Activated CD4-positive, alpha-beta T cell treated with anti-CD3 and anti-CD28 coated beads for 36 hours (primary cell): ENCODE measurements at regions of chr19 and their contacts with region 1.

Region 1: GRCh38 chr19:16495982-16496612 is at the starts of genes C19orf44 and CALR3:
- DNase-seq: peak; percentile 99
- ATAC-seq: peak; percentile 99
- H3K4me3 Mint-ChIP-seq: peak within 1 kb of the TSS; percentile 89
- H3K27ac Mint-ChIP-seq: peak within 1 kb of the TSS; percentile 79
- H3K4me1 Mint-ChIP-seq: peaks cover 13% of the 10 kb centered on the region
- H3K27me3 Mint-ChIP-seq: no peaks in the 10 kb centered on the region
- total RNA-seq, gene C19orf44: 2.9 to 4.0 TPM
- total RNA-seq, gene CALR3: not detected

Region 2: GRCh38 chr19:16197622-16198369 is 298.3 kb before region 1 on chr19 and contains the start of gene AP1M1:
- CTCF ChIA-PET with region 1: no interaction called
- POLR2A ChIA-PET with region 1: no interaction called
- intact Hi-C with region 1: loop called in 1 of 2 experiments (anchors 1 kb)
- DNase-seq: peak; percentile 99
- ATAC-seq: peak; percentile 95
- H3K4me3 Mint-ChIP-seq: peak within 1 kb of the TSS; percentile 83
- H3K27ac Mint-ChIP-seq: peak within 1 kb of the TSS; percentile 96
- H3K4me1 Mint-ChIP-seq: peaks cover 33% of the 10 kb centered on the region
- H3K27me3 Mint-ChIP-seq: no peaks in the 10 kb centered on the region
- total RNA-seq, gene AP1M1: 61.8 to 92.0 TPM

Region 3: DNA sequence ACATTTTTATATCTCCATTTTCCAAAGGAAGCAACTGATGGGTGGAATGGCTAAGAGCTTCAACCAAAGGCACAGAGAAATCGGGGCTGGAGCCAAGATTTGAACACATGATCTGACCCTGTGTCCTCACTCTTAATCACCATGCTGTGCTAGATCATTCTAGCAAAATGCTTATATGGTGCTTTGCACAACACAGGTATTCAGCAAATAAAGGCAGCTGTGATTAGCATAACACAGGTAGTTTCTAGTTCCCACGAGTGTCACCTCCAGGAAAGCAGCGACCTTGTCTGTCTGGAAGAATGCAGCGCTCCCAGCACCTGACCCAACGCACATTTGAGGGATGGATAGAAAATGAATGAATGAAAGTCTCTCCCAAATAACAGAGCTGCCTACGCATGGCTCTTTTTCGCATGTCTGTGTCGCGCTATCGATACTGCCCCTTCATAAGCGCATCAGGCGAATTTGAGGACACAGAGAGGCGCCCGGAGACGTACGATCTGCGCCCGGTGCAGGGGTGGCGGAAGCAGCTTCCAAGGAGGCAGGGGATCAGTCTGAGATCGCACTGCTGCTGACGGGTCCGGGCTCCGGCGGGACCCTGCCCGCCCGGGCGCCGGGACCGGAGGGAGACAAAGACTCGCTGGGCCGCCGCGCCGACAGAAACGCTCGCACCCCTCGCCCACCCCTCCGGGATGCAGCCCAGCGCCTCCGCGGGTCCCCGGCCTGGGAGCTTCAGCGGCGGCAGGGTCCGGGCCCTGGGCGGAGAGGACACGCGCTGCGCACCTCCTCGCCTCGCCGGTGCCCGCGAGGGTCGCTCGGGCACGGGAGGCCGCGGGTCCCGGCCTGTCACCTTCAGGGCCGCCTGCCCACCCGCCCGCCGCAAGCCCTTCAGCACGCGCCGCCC is 24.9 kb before region 1 on chr19:
- CTCF ChIA-PET with region 1: interaction called, 3 read pairs
- POLR2A ChIA-PET with region 1: no interaction called
- intact Hi-C with region 1: loop called (anchors 1 kb)
- DNase-seq: peak; percentile 60
- ATAC-seq: peak; percentile 20
- H3K4me3 Mint-ChIP-seq: peak overlapping the region; percentile 85
- H3K27ac Mint-ChIP-seq: peak overlapping the region; percentile 72
- H3K4me1 Mint-ChIP-seq: peaks cover 37% of the 10 kb centered on the region
- H3K27me3 Mint-ChIP-seq: peaks cover 2% of the 10 kb centered on the region

Region 4: GRCh38 chr19:16528073-16528472 is 32.0 kb after region 1 on chr19:
- CTCF ChIA-PET with region 1: no interaction called
- POLR2A ChIA-PET with region 1: no interaction called
- intact Hi-C with region 1: no loop called
- DNase-seq: peak; percentile 72
- ATAC-seq: peak; percentile 77
- H3K4me3 Mint-ChIP-seq: no peak overlapping the region
- H3K27ac Mint-ChIP-seq: no peak overlapping the region
- H3K4me1 Mint-ChIP-seq: no peaks in the 10 kb centered on the region
- H3K27me3 Mint-ChIP-seq: no peaks in the 10 kb centered on the region

Region 5: DNA sequence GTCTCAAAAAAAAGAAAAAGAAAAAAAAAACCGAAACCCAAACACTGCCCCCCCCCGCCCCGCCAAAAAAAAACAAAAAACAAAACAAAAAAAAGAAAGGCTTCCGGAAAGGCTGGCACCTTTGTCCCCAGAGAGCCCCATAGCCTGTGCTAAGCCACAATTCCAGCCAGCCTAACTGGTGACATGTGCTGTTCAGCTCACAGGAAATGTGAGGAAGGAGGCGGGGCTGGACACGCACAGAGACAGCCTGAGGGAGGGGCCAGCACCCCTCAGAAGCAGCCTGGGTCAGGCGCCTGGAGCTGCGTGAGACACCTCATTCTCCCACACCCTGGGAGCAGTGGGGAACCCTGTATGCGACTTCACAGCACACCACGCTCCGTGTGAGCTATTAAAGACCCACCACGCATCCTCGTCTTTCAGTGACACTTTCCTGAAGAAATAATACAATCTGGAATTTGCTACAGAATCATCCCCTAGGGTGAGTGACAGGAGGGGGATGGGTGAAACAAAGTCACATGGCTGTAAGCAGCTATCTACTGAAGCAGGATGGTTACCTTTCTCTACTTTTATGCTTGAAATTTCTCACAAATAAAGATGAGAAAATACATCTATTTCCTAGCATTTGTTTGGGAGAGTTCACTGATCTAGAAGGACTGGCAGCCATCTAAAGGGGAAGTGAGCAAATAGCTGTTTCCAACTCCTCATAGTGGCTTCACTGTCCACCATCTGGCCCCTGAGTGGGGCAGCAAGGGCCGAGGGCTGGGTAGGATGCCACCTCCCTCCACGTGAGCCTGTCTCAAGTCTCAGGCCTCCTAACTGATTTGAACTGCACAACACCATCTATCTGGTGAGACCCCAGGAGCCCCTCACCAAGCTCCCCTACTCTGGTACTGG is 88.4 kb after region 1 on chr19:
- CTCF ChIA-PET with region 1: no interaction called
- POLR2A ChIA-PET with region 1: no interaction called
- intact Hi-C with region 1: loop called in 1 of 2 experiments (anchors 1 kb)
- DNase-seq: peak; percentile 94
- ATAC-seq: peak; percentile 79
- H3K4me3 Mint-ChIP-seq: peak overlapping the region; percentile 79
- H3K27ac Mint-ChIP-seq: peak overlapping the region; percentile 95
- H3K4me1 Mint-ChIP-seq: peaks cover 76% of the 10 kb centered on the region
- H3K27me3 Mint-ChIP-seq: no peaks in the 10 kb centered on the region

Region 6: GRCh38 chr19:16615808-16616207 is 119.7 kb after region 1 on chr19:
- CTCF ChIA-PET with region 1: no interaction called
- POLR2A ChIA-PET with region 1: no interaction called
- intact Hi-C with region 1: no loop called
- DNase-seq: no peak
- ATAC-seq: peak; percentile 68
- H3K4me3 Mint-ChIP-seq: no peak overlapping the region
- H3K27ac Mint-ChIP-seq: no peak overlapping the region
- H3K4me1 Mint-ChIP-seq: peaks cover 71% of the 10 kb centered on the region
- H3K27me3 Mint-ChIP-seq: no peaks in the 10 kb centered on the region